Heart left ventricle (tissue), 16 donors: ENCODE measurements at regions of chr19 and their contacts with region 1.

Region 1: DNA sequence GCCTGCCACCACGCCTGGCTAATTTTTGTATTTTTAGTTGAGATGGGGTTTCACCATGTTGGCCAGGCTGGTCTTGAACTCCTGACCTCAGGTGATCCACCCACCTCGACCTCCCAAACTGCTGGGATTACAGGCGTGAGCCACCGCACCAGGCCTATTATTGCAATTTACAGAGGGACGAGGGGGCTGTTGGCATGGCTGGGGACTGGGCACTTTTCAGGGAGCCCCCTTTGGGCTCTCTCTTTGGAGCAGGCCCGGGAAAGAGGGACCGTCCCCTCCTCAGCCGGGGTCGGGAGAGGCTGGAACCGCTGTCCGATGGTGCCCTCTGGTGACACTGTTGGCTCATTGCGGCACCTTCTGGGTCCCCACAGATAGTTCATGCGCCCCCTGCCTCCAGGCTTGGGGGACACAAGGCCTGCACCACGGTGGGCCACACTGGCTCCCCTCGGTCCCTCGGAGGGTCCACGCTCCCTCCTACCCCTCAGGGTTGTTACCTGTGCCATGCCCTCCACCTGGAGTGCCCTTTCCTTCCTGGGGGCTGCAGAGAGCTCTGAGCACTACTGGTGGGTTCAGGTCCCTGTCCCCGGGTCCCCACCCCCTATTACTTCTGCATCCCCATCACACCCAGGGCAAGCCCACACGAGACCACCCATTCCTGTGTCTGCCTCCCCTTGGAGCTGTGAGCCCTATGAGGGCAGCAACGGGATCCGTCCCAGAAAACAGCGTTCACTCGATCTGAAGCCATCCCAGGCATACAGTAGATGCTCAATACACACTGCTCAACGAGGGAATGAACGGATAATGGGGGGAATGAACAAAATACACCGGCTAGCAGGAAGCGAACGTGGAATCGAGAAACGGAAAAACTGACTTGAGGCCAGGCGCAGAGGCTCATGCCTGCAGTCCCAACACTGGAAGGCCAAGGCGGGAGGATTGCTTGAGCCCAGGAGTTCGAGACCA is 12.5 kb downstream of the FEM1A start:
- DNase-seq: peak; percentile 55 to 79 (median 65)
- ATAC-seq: peak in 3 of 4 donors; percentile 59 to 68 (median 68)
- H3K4me3 ChIP-seq: no peak overlapping the region
- H3K27ac ChIP-seq: peak overlapping the region in 2 of 12 donors; percentile 67 to 76
- H3K4me1 ChIP-seq: peaks cover 0 to 34% (median 11%) of the 10 kb centered on the region in 12 donors
- H3K27me3 ChIP-seq: no peaks in the 10 kb centered on the region
- CTCF ChIP-seq: peak; percentile 65 to 87 (median 77)
- POLR2A ChIP-seq: no peak

Region 2: DNA sequence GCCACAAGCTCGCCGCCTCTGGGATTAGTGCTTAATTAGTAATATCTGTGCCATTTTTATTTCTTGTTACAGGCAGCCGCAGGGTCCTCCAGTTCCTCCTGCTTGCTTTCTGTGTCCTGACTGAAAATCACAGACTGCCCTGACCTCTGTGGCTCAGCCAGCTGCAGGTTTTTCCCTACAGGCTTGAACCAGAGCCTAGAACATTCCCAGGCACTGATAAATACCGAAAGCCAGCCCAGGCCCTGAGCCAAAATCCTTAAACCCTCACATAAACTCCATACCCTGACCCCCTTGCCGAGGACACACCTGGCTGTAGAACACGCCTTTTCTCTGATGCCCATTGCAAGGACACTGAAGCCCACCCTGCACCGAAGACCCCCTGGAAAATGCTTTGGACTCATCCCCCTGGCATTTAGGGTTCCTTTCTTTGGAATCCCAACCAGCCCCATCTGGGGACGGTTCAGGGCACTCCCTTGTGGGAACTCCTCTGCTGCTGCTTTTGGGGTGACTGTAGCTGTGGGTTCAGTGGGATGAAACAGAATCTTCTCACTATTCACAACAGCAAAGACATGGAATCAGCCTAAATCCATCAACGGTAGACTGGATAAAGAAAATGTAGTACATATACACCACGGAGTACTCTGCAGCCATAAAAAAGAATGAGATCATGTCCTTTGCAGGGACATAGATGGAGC is 95.9 kb before region 1 on chr19:
- intact Hi-C with region 1: no loop called
- DNase-seq: peak in 4 of 5 donors; percentile 53 to 84 (median 74)
- ATAC-seq: peak; percentile 71 to 85 (median 80)
- H3K4me3 ChIP-seq: no peak overlapping the region
- H3K27ac ChIP-seq: peak overlapping the region; percentile 69 to 89 (median 74)
- H3K4me1 ChIP-seq: peaks cover 2 to 50% (median 42%) of the 10 kb centered on the region in 12 donors
- H3K27me3 ChIP-seq: no peaks in the 10 kb centered on the region
- CTCF ChIP-seq: no peak
- POLR2A ChIP-seq: no peak

Region 3: GRCh38 chr19:4732680-4733114 is 71.3 kb before region 1 on chr19:
- intact Hi-C with region 1: loop called in 6 of 10 experiments (anchors 1 to 5 kb)
- DNase-seq: no peak
- ATAC-seq: peak in 3 of 4 donors; percentile 84 to 92 (median 88)
- H3K4me3 ChIP-seq: no peak overlapping the region
- H3K27ac ChIP-seq: no peak overlapping the region
- H3K4me1 ChIP-seq: peaks cover 0 to 7% (median 0%) of the 10 kb centered on the region in 12 donors
- H3K27me3 ChIP-seq: no peaks in the 10 kb centered on the region
- CTCF ChIP-seq: peak; percentile 65 to 84 (median 76)
- POLR2A ChIP-seq: no peak

Region 4: DNA sequence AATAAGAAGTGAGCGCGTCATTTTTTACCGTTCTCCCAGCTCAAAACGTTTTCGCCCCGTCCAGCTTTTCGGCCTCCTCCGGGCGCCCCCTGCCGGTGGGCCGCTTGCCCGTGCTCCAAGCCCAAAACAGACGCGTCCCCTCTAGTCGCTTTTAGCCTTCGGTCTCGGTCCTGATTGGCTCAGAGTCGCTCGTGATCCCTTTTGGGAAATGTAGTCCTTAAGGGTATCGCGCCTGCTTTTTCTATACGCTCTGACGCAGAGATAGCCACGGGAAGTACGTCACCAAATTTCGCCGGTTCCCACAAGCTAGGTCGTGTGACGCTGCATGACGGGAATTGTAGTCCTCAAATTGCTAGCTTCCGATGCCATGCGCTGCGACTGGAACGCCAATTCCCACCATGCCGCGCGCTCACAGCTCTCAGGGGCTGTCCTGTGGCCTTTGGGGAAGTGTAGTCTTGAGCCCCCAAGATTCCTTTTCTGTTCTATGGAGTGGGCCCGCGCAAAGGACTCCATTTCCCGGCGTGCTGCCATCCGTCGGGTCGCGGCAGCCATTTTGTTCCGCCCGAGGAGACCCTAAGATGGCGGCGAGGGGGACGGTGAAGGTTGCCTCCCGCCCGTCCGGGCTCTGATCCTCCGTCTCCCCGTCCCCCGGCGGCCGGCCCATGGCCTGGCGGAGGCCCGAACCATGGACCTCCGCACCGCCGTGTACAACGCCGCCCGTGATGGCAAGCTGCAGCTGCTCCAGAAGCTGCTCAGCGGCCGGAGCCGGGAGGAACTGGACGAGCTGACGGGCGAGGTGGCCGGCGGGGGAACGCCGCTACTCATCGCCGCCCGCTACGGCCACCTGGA is 12.6 kb before region 1 on chr19 and contains the start of gene FEM1A:
- intact Hi-C with region 1: loop called in 1 of 10 experiments (anchors 1 kb)
- DNase-seq: peak; percentile 99 to 100 (median 100)
- ATAC-seq: peak; percentile 99
- H3K4me3 ChIP-seq: peak within 1 kb of the TSS; percentile 74 to 98 (median 94)
- H3K27ac ChIP-seq: peak within 1 kb of the TSS; percentile 90 to 98 (median 95)
- H3K4me1 ChIP-seq: peaks cover 0 to 49% (median 35%) of the 10 kb centered on the region in 12 donors
- H3K27me3 ChIP-seq: no peaks in the 10 kb centered on the region
- CTCF ChIP-seq: peak; percentile 95 to 100 (median 98)
- POLR2A ChIP-seq: peak; percentile 7 to 71
- total RNA-seq, gene FEM1A: 30.7 to 94.0 (median 41.8) TPM